ENCODE measurements at regions of chr5 and their contacts with region 1.

Region 1: GRCh38 chr5:95631991-95632675 is 12.2 kb downstream of the GPR150 start:
- DNase-seq: peak; percentile 81
- H3K4me3 Mint-ChIP-seq: no peak overlapping the region
- H3K27ac Mint-ChIP-seq: peak overlapping the region; percentile 96
- H3K4me1 Mint-ChIP-seq: peaks cover 20% of the 10 kb centered on the region
- H3K27me3 Mint-ChIP-seq: peaks cover 8% of the 10 kb centered on the region

Region 2: DNA sequence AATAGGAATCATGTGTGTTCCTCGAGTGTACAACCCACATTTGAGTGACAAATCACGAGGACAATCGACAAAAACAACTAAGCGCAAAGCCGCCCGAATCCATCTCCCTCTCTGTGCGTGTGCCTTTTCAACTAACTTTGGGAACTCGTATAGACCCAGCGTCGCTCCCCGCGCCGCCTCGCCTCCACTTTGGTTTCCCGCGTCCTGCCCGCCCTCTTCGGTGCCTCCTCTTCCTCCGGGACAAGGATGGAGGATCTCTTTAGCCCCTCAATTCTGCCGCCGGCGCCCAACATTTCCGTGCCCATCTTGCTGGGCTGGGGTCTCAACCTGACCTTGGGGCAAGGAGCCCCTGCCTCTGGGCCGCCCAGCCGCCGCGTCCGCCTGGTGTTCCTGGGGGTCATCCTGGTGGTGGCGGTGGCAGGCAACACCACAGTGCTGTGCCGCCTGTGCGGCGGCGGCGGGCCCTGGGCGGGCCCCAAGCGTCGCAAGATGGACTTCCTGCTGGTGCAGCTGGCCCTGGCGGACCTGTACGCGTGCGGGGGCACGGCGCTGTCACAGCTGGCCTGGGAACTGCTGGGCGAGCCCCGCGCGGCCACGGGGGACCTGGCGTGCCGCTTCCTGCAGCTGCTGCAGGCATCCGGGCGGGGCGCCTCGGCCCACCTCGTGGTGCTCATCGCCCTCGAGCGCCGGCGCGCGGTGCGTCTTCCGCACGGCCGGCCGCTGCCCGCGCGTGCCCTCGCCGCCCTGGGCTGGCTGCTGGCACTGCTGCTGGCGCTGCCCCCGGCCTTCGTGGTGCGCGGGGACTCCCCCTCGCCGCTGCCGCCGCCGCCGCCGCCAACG is 11.9 kb before region 1 on chr5 and contains the start of gene GPR150:
- CTCF ChIA-PET with region 1: interaction called, 18 read pairs
- POLR2A ChIA-PET with region 1: interaction called, 4 read pairs
- DNase-seq: peak; percentile 64
- H3K4me3 Mint-ChIP-seq: peak within 1 kb of the TSS; percentile 78
- H3K27ac Mint-ChIP-seq: peak within 1 kb of the TSS; percentile 89
- H3K4me1 Mint-ChIP-seq: peaks cover 43% of the 10 kb centered on the region
- H3K27me3 Mint-ChIP-seq: peaks cover 8% of the 10 kb centered on the region
- total RNA-seq, gene GPR150: 0.87 to 1.2 TPM

Region 3: DNA sequence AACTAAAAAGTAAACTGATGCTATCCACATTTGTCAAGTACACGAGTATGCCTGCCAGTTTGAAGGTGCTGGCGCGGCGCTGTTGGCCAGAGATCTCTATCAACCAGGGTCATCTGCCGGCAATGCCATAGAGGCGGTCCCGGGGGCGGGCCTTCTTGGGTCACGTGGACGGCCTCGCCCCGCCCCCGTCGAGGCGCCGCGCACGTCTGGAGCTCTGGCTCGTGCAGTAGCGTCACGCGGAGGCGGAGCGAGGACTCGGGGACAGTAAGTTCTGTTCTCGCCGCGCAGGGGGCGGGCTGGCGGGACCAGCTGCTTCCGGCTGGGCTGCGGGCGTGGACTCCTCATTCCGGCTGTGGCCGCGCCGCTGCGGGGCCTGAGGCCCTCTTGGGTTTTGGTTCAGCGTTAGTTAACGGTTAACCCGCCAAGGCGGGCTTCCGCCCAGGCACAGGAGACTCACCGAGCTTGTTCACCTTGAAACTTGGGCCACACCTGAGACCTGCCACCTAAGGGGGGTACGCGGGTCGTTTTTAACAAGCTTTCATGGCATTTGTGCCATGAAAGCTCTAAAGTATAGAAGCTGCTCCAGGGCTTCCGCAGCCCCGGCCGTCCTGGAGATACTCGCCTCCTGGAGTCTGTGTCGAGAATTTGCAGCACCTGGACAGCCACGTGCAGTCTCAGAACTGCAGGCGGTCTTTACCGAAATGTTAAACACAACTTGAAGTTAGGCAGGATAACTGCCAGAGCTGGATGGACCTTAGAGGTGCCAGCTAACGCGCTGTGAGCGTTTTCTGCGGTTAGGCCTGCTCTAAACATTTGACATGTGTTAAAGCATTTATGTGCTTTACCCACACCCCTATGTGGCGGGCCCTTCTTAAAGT is 14.7 kb after region 1 on chr5 and contains the start of gene RFESD:
- CTCF ChIA-PET with region 1: interaction called, 12 read pairs
- POLR2A ChIA-PET with region 1: no interaction called
- DNase-seq: peak; percentile 96
- H3K4me3 Mint-ChIP-seq: peak within 1 kb of the TSS; percentile 81
- H3K27ac Mint-ChIP-seq: peak within 1 kb of the TSS; percentile 95
- H3K4me1 Mint-ChIP-seq: peaks cover 52% of the 10 kb centered on the region
- H3K27me3 Mint-ChIP-seq: no peaks in the 10 kb centered on the region
- total RNA-seq, gene RFESD: 5.9 to 6.2 TPM

Region 4: GRCh38 chr5:95660060-95660459 is 27.9 kb after region 1 on chr5:
- CTCF ChIA-PET with region 1: no interaction called
- POLR2A ChIA-PET with region 1: no interaction called
- DNase-seq: no peak
- H3K4me3 Mint-ChIP-seq: no peak overlapping the region
- H3K27ac Mint-ChIP-seq: no peak overlapping the region
- H3K4me1 Mint-ChIP-seq: peaks cover 3% of the 10 kb centered on the region
- H3K27me3 Mint-ChIP-seq: no peaks in the 10 kb centered on the region